Gastrocnemius medialis (tissue), 4 donors: ENCODE measurements at regions of chr4 and their contacts with region 1.

Region 1: GRCh38 chr4:8468746-8469535 is 28.4 kb downstream of the TRMT44 start:
- DNase-seq: peak in 1 of 2 donors; percentile 35
- ATAC-seq: peak; percentile 40 to 72
- H3K4me3 ChIP-seq: no peak overlapping the region
- H3K27ac ChIP-seq: no peak overlapping the region
- H3K4me1 ChIP-seq: no peaks in the 10 kb centered on the region
- H3K27me3 ChIP-seq: no peaks in the 10 kb centered on the region
- CTCF ChIP-seq: peak; percentile 50 to 78 (median 71)
- POLR2A ChIP-seq: no peak

Region 2: DNA sequence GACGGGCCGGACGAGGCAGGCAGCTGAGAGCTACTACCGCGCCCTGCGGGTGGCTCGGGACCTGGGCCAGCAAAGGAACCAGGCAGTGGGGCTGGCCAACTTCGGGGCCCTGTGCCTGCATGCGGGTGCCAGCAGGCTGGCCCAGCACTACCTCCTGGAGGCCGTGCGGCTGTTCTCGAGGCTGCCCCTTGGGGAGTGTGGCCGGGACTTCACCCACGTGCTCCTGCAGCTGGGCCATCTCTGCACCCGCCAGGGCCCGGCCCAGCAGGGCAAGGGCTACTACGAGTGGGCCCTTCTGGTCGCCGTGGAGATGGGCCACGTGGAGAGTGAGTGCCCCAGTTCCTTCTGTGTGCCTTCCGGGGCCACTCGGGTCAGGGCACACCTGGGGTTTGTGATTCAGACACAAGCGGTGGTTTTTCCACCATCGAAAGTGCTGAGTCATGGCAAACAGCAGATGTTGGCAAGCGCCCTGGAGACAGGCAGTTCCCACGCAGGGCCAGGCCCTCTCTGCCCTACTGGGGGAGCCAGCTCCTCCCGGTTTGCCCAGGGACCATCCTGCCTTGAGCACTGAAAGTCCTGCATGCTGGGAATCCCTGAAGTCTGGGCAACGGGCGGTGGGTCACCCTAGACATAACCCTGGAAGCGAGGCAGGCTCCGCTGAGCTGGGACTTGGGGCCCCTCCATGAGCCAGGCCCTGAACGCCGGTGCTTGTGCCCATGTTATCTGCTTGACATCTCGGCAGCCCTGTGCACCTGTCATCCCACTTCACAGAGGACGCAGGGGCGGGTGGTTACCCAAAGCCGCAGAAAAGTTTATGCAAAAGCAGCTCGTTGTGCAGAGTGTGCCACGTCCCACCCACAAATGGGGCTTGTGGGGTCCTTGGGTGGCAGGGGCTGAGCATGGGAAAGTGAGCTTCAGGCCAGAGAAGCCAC is 240.4 kb before region 1 on chr4:
- in situ Hi-C with region 1: no loop called
- intact Hi-C with region 1: no loop called
- DNase-seq: peak; percentile 77 to 86
- ATAC-seq: peak; percentile 91 to 93
- H3K4me3 ChIP-seq: peak overlapping the region in 1 of 4 donors; percentile 3
- H3K27ac ChIP-seq: peak overlapping the region; percentile 65 to 83 (median 80)
- H3K4me1 ChIP-seq: peaks cover 14% of the 10 kb centered on the region in 2 donors
- H3K27me3 ChIP-seq: no peaks in the 10 kb centered on the region
- CTCF ChIP-seq: no peak
- POLR2A ChIP-seq: no peak

Region 3: GRCh38 chr4:8451440-8452197 is 17.3 kb before region 1 on chr4:
- in situ Hi-C with region 1: no loop called
- intact Hi-C with region 1: no loop called
- DNase-seq: no peak
- ATAC-seq: no peak
- H3K4me3 ChIP-seq: no peak overlapping the region
- H3K27ac ChIP-seq: no peak overlapping the region
- H3K4me1 ChIP-seq: no peaks in the 10 kb centered on the region
- H3K27me3 ChIP-seq: no peaks in the 10 kb centered on the region
- CTCF ChIP-seq: no peak
- POLR2A ChIP-seq: no peak

Region 4: GRCh38 chr4:8594097-8595038 is 125.4 kb after region 1 on chr4:
- in situ Hi-C with region 1: loop called in 1 of 4 experiments (anchors 10 kb)
- intact Hi-C with region 1: loop called (anchors 2 kb)
- DNase-seq: peak in 1 of 2 donors; percentile 22
- ATAC-seq: peak; percentile 52 to 70
- H3K4me3 ChIP-seq: no peak overlapping the region
- H3K27ac ChIP-seq: no peak overlapping the region
- H3K4me1 ChIP-seq: no peaks in the 10 kb centered on the region
- H3K27me3 ChIP-seq: peaks cover 33 to 40% (median 36%) of the 10 kb centered on the region in 3 donors
- CTCF ChIP-seq: peak in 3 of 5 experiments; percentile 40 to 53 (median 48)
- POLR2A ChIP-seq: no peak